ENCODE measurements at regions of chr12 and their contacts with region 1.

Region 1: DNA sequence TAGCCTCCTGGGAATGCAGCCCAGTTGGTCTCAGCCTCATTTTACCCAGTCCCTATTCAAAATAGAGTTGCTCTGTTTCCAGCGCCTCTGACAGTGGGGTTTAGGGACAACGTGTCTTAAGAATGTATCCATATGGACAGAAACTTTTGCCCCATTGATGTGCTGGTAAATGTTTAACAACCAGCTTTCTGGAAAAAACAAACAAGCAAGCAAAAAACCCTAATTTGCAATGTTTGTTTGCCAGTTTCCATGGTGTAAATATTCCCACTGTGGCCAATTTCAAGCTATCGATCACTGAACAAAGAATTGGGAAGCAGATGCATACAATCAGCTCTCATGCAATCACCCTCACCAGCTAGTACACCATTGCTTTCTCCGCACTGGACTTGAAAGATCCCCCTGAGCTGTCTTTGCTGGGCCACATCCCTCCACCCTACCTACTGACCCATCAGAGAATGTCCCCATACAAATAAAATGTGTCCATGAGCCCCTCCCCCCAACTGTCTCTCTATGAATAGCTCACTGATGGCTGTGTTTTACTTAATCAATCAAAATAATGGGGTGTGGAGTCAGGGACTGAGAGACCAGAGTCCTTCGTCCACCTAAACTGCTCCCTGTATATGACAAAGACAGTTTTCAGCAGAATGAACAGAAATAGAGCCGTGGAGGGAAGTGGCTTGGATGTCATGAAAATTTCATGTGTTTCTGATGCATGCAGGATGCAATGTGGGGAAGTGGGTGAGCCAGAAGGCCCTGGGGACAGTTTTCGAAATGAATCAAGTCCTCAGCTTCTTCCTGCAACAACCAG is 40.8 kb downstream of the CCDC60 start:
- DNase-seq: no peak
- H3K4me3 ChIP-seq: no peak overlapping the region
- CTCF ChIP-seq: no peak

Region 2: DNA sequence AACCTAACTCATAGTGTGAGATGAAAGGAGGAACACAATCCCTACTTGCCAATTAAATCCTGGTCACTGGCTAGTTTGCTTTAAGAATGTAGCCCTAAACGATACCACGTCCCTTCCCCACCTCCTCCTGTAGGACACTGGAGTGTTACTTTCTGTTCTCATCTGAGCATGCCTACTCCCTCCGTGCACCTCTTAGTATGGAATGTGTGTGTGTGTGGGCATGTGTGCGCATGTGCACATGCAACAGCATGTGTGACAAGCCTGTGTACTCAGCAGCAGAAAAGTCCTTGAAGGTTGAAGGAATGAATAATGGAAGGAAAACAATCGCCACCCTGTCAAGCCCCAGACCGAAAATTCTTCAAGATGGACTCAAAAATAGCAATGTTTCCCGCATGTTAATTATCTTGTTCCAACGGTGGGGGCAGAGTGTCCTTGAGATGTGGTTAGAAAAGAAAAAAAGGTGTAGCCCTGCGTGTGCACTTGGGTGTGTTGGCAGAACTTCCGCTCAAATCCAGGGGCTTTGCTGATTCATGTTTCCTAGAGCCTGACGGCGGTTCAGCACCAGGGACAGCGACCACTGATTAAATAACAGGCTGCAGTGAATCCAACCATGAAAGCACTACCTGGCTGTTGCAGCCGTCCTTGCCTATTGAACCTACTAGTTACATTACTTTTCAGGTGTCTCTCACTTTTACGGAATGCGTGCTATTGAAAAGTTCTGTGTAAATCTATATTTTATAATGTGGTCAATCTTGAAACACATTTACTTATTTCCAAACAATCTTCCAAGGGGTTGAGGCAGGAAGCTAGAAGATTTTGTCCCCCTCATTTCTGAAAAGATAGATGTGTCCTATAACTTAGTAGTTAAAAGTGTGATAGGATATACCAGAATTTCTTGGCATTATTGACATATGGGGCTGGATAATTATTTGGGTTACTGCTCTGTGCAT is 314.2 kb before region 1 on chr12:
- in situ Hi-C with region 1: no loop called
- DNase-seq: peak; percentile 3
- H3K4me3 ChIP-seq: no peak overlapping the region
- CTCF ChIP-seq: no peak

Region 3: GRCh38 chr12:119340578-119340977 is 34.7 kb before region 1 on chr12:
- in situ Hi-C with region 1: loop called (anchors 5 kb)
- DNase-seq: no peak
- H3K4me3 ChIP-seq: no peak overlapping the region
- CTCF ChIP-seq: no peak

Region 4: DNA sequence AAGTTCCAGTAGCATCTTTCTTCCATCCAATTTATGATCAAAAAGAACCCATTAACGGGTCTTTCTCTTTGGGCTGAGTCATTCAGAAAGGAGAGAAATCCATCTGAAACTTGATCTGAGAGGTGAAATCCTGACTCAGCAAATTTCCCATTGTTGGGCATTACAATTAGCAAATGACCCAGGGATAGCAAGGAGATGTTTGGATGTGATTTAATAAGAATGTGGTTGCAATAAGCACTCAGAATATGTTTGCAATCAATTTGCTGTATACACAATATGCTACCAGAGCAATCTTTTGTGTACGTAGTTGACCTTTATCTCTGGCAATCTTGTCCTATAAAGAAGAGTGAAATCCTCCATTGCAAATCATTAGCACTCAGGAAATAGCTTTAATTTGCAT is 82.0 kb after region 1 on chr12:
- in situ Hi-C with region 1: no loop called
- DNase-seq: no peak
- H3K4me3 ChIP-seq: no peak overlapping the region
- CTCF ChIP-seq: no peak

Measured in astrocyte of the cerebellum (primary cell).